B cell (primary cell): ENCODE measurements at regions of chr16 and their contacts with region 1.

Region 1: GRCh38 chr16:31868691-31869167 is 4.9 kb upstream of the ZNF267 start:
- DNase-seq: peak; percentile 81
- ATAC-seq: no peak
- H3K4me3 ChIP-seq: peak overlapping the region in 3 of 5 experiments; percentile 18 to 26 (median 22)
- H3K4me3 Mint-ChIP-seq: peak overlapping the region; percentile 69
- H3K27ac ChIP-seq: peak overlapping the region; percentile 87 to 88
- H3K27ac Mint-ChIP-seq: peak overlapping the region; percentile 75
- H3K4me1 ChIP-seq: peaks cover 19 to 27% of the 10 kb centered on the region in 2 donors
- H3K4me1 Mint-ChIP-seq: peaks cover 46% of the 10 kb centered on the region
- H3K27me3 ChIP-seq: no peaks in the 10 kb centered on the region
- H3K27me3 Mint-ChIP-seq: peaks cover 5% of the 10 kb centered on the region
- CTCF ChIP-seq: peak; percentile 90

Region 2: DNA sequence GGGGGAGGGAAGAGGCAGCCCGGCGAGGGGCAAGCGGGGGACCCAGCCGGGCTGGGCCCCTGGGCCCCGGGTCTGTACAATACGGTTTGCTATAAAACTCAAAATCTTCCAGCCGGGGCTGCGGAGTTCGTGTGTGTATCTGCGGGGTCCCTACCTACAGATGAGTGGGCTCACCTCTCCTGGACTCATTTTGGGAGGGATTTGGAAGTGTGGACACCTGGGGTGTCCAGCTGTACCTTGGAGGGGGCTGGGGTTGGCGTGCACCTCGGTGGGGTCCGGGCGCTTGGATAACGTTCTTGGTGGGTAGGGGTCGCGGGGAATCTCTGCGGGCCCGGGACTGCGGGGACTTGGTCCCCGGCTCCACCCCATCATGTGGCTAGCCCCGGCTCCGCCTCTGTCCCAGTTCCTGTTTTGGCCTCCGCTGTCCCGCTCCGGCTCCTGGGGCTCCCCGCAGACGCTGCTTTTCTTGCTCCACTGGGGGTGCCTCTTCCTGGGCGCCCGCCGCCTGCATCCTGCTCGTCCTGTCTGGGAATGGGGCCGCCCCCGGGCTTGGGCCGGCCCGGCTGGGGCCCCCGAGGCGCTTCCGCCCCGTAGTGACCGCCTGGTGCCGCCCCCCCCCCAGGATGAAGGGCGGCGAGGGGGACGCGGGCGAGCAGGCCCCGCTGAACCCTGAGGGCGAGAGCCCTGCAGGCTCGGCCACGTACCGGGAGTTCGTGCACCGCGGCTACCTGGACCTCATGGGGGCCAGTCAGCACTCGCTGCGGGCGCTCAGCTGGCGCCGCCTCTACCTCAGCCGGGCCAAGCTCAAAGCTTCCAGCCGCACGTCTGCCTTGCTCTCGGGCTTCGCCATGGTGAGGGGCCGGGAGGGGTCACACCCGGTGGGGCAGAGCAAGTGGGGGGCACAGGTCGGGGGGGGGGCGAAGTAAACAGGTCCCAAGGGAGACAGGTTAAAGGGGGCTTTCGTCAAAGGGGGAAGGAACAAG is 919.8 kb before region 1 on chr16 and contains the start of gene ORAI3:
- CTCF ChIA-PET with region 1: interaction called, 3 read pairs
- POLR2A ChIA-PET with region 1: interaction called, 10 read pairs
- intact Hi-C with region 1: loop called (anchors 2 kb)
- DNase-seq: peak; percentile 85
- ATAC-seq: peak; percentile 76
- H3K4me3 ChIP-seq: peak within 1 kb of the TSS; percentile 60 to 93 (median 77)
- H3K4me3 Mint-ChIP-seq: peak within 1 kb of the TSS; percentile 95
- H3K27ac ChIP-seq: peak within 1 kb of the TSS; percentile 61 to 78
- H3K27ac Mint-ChIP-seq: peak within 1 kb of the TSS; percentile 92
- H3K4me1 ChIP-seq: peaks cover 14 to 36% of the 10 kb centered on the region in 2 donors
- H3K4me1 Mint-ChIP-seq: peaks cover 27% of the 10 kb centered on the region
- H3K27me3 ChIP-seq: no peaks in the 10 kb centered on the region
- H3K27me3 Mint-ChIP-seq: no peaks in the 10 kb centered on the region
- CTCF ChIP-seq: no peak
- total RNA-seq, gene ORAI3: 51.8 and 55.8 TPM in 2 replicates

Region 3: DNA sequence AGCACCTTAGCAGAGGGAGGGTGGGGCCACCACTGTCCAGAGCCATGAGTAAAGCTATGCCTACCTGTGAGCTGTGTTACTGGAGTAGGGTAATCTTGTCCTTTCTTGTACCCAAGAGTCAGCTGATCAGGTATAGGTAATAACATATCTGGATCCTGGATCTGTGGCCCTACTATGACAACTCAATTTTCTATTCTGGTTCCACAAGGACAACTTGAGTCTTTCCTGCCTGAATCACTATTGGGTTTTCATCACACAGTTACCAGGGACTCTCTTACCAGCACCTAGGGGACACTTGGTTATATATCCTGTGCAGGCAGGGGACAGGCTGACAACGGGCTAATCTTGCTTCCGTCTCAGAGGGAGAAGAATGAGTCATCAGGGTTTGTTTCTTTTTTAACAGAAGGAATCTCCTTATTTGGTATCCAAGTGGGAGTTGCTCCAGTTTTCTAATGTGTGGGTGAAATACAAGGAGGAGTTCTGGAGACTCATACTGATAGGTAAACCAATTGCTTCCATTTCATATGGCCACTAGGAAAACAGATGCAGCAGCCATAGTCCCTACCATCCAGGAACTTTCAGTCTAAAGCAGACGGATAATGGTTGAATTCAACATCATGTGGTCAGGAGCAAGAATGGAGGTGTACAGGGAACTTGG is 11.7 kb after region 1 on chr16:
- CTCF ChIA-PET with region 1: interaction called, 14 read pairs
- POLR2A ChIA-PET with region 1: no interaction called
- intact Hi-C with region 1: no loop called
- DNase-seq: no peak
- ATAC-seq: no peak
- H3K4me3 ChIP-seq: no peak overlapping the region
- H3K4me3 Mint-ChIP-seq: peak overlapping the region; percentile 26
- H3K27ac ChIP-seq: peak overlapping the region in 1 of 2 donors; percentile 50
- H3K27ac Mint-ChIP-seq: peak overlapping the region; percentile 73
- H3K4me1 ChIP-seq: peaks cover 41 to 45% of the 10 kb centered on the region in 2 donors
- H3K4me1 Mint-ChIP-seq: peaks cover 66% of the 10 kb centered on the region
- H3K27me3 ChIP-seq: no peaks in the 10 kb centered on the region
- H3K27me3 Mint-ChIP-seq: no peaks in the 10 kb centered on the region
- CTCF ChIP-seq: no peak